ENCODE measurements at regions of chr14 and their contacts with region 1.

Region 1: DNA sequence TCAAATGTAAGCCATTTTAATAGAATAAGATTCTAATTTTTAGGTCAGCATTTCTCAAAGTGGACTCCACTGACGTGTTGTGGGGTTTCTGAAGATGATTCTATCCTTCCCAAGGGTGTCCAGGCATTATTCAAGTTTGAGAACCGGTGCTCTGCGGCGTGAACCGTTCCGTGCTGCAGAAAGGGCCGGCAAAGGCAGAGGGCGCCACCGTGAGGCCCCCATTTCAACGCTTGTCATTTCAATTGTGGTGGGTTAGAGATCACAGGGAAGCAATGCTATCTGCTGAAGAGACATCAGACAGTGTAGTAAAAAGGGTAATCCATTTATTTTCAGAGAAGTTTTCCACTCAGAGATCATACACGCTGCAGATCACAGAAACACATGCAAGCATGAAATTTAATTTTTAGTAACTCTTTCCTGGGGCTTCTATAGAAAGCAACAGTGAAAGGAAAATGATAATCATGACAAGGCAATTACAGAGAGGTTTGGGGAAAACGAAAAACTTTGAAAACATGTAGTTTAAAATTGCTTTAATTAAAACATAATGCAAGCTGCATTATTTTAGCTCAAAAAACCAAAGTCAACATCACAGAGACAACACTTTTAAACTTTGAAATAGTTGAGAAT is 201.7 kb downstream of the EXOC5 start:
- DNase-seq: peak; percentile 64
- H3K4me3 Mint-ChIP-seq: no peak overlapping the region
- H3K27ac Mint-ChIP-seq: no peak overlapping the region
- H3K4me1 Mint-ChIP-seq: peaks cover 4% of the 10 kb centered on the region
- H3K27me3 Mint-ChIP-seq: peaks cover 28% of the 10 kb centered on the region

Region 2: DNA sequence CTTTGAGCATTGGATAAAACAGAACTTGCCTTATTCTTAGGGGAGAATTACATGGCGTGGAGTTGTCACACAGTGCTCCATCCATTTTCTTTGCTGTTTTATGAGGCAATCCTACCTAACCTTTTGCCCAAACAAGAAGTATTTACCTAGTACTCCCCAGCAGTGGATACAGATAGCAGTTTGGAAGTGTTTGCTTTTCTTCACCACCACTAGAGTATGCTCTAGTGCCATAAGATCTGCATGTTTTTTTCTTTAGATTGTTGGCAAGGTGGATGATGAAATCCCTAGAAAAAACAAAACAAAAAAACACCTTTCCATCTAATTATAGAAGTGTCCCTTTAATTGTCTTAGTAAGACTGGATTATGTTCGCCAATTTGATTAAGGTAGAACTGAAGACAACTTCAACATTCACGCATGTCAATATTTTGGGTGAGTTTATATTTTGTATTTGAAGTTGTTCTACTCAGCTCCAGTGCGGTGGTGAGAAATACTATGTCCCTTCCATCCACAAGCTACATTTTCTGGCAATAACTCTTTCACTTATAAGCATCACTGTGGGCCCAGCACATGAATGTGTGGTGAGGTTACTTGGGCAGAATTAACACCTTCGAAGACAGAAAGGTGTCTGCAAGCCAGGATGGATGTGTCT is 511.0 kb before region 1 on chr14:
- CTCF ChIA-PET with region 1: no interaction called
- intact Hi-C with region 1: loop called (anchors 2 kb)
- DNase-seq: no peak
- H3K4me3 Mint-ChIP-seq: no peak overlapping the region
- H3K27ac Mint-ChIP-seq: no peak overlapping the region
- H3K4me1 Mint-ChIP-seq: no peaks in the 10 kb centered on the region
- H3K27me3 Mint-ChIP-seq: peaks cover 8% of the 10 kb centered on the region

Region 3: GRCh38 chr14:56659964-56660551 is 406.9 kb before region 1 on chr14:
- CTCF ChIA-PET with region 1: interaction called, 3 read pairs
- intact Hi-C with region 1: loop called (anchors 1 kb)
- DNase-seq: no peak
- H3K4me3 Mint-ChIP-seq: no peak overlapping the region
- H3K27ac Mint-ChIP-seq: no peak overlapping the region
- H3K4me1 Mint-ChIP-seq: no peaks in the 10 kb centered on the region
- H3K27me3 Mint-ChIP-seq: no peaks in the 10 kb centered on the region

Region 4: DNA sequence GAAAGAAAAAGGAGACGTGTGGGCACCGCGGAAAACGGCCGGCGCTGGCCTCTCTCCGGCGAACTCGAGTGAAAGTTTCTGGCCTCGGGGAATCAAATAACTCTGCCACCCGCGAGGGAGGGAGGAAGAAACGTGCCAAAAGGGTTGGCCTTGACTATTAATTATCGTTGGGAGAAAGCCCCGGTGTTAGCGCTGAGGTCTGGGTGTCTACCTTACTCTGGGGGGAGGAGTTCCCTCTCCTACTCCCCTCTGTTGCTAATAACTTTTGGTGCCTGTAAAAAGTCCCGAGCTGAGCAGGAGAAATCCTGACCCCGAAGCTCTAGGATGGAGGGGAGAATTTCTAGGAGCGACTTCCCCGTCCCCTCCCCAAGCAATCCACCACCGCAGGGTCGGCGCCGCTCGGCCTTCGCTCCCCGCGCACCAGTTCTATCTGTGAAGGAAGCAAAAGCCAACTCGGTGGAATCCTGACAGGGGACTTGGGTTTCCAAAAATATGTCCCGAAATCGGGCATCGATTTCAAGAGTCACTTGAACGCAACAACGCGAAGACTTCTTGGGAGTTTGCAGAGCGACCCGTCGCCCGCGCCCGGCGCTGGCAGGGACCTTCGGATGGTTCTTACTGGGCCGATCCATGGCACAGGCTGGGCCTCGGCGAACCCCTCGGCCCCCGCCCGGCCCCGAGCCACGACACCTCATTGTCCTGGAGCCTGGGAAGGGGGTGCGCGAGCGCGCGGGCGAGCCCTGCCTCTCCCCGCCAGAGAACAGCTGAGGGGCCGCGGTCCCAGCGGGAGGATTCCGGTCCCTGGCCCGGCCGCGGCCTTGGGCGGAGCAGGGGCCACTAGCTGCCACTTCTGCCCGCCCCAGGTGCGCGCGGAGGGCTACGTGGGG is 258.4 kb before region 1 on chr14:
- CTCF ChIA-PET with region 1: no interaction called
- intact Hi-C with region 1: loop called (anchors 10 kb)
- DNase-seq: no peak
- H3K4me3 Mint-ChIP-seq: peak overlapping the region; percentile 18
- H3K27ac Mint-ChIP-seq: no peak overlapping the region
- H3K4me1 Mint-ChIP-seq: peaks cover 32% of the 10 kb centered on the region
- H3K27me3 Mint-ChIP-seq: peaks cover 79% of the 10 kb centered on the region

Region 5: DNA sequence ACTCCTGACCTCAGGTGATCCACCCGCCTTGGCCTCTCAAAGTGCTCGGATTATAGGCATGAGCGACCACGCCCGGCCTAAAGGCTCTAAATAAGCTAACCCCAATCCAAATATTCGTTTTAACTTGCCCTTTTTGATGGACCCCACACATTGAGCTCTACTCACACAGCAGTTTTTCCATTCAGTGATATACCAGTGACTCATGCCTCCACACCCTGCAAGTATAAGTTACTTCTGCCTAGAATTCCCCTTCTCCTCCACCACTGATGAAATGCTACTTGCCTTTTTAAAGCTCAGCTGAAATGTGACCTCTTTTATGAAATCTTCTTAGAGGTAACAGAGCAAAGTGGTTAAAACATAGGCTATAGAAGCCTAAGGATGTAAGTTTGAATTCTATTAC is 132.9 kb after region 1 on chr14:
- CTCF ChIA-PET with region 1: no interaction called
- intact Hi-C with region 1: loop called (anchors 10 kb)
- DNase-seq: no peak
- H3K4me3 Mint-ChIP-seq: no peak overlapping the region
- H3K27ac Mint-ChIP-seq: no peak overlapping the region
- H3K4me1 Mint-ChIP-seq: peaks cover 3% of the 10 kb centered on the region
- H3K27me3 Mint-ChIP-seq: peaks cover 6% of the 10 kb centered on the region

Region 6: GRCh38 chr14:57317316-57317715 is 250.3 kb after region 1 on chr14:
- CTCF ChIA-PET with region 1: no interaction called
- intact Hi-C with region 1: loop called (anchors 1 kb)
- DNase-seq: peak; percentile 85
- H3K4me3 Mint-ChIP-seq: no peak overlapping the region
- H3K27ac Mint-ChIP-seq: no peak overlapping the region
- H3K4me1 Mint-ChIP-seq: peaks cover 5% of the 10 kb centered on the region
- H3K27me3 Mint-ChIP-seq: peaks cover 4% of the 10 kb centered on the region

Measured in activated naive CD4-positive, alpha-beta T cell treated with anti-CD3 and anti-CD28 coated beads for 36 hours (primary cell).